ENCODE measurements at regions of chr9 and their contacts with region 1.

Region 1: GRCh38 chr9:15999422-16000339 is 446.8 kb downstream of the CCDC171 start:
- DNase-seq: no peak
- ATAC-seq: no peak
- H3K4me3 ChIP-seq: no peak overlapping the region
- H3K4me3 Mint-ChIP-seq: no peak overlapping the region
- H3K27ac ChIP-seq: no peak overlapping the region
- H3K27ac Mint-ChIP-seq: no peak overlapping the region
- H3K4me1 ChIP-seq: no peaks in the 10 kb centered on the region
- H3K4me1 Mint-ChIP-seq: no peaks in the 10 kb centered on the region
- H3K27me3 ChIP-seq: no peaks in the 10 kb centered on the region
- H3K27me3 Mint-ChIP-seq: no peaks in the 10 kb centered on the region

Region 2: GRCh38 chr9:16247188-16247875 is 247.7 kb after region 1 on chr9:
- CTCF ChIA-PET with region 1: no interaction called
- POLR2A ChIA-PET with region 1: no interaction called
- intact Hi-C with region 1: loop called in 1 of 2 experiments (anchors 5 kb)
- DNase-seq: no peak
- ATAC-seq: no peak
- H3K4me3 ChIP-seq: no peak overlapping the region
- H3K4me3 Mint-ChIP-seq: no peak overlapping the region
- H3K27ac ChIP-seq: no peak overlapping the region
- H3K27ac Mint-ChIP-seq: no peak overlapping the region
- H3K4me1 ChIP-seq: no peaks in the 10 kb centered on the region
- H3K4me1 Mint-ChIP-seq: no peaks in the 10 kb centered on the region
- H3K27me3 ChIP-seq: no peaks in the 10 kb centered on the region
- H3K27me3 Mint-ChIP-seq: no peaks in the 10 kb centered on the region

Measured in naive thymus-derived CD4-positive, alpha-beta T cell (primary cell).